Activated CD4-positive, alpha-beta memory T cell treated with anti-CD3 and anti-CD28 coated beads for 36 hours (primary cell): ENCODE measurements at regions of chr4 and their contacts with region 1.

Region 1: DNA sequence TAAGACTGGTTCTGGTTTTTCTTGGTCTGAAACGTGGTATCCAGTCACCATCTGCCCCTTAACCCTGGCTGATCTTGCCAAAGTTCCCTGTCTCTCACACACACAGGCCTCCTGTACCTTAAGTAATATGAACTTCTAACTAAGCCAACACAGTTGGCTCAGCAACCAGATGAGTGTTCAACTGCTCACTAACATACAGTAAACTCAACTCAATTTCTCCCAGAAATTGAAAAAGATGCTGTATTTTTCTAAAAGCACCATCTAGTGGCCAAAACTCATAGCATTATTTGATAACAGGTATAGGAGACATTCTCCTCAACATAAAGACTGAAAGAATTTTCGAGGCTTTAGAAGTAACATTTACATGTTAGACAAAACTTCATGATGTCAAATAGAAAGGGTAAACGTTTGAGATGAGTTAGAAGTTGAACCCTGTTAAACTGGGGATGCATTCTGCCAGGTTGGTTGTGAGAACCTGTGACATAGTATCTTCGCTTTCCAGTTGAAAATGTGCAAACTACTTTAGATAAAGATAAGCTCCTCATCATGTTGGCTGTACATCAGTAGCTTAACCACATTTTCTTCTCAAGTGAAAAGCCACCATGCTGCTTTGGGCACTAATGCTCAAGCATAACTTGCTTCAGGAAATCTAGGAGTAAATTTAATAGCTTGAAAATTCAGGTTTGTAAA is 31.2 kb downstream of the CCNI start:
- DNase-seq: no peak
- H3K4me3 Mint-ChIP-seq: no peak overlapping the region
- H3K27ac Mint-ChIP-seq: no peak overlapping the region
- H3K4me1 Mint-ChIP-seq: peaks cover 8% of the 10 kb centered on the region
- H3K27me3 Mint-ChIP-seq: no peaks in the 10 kb centered on the region

Region 2: GRCh38 chr4:76511947-76512346 is 532.7 kb before region 1 on chr4:
- CTCF ChIA-PET with region 1: interaction called, 9 read pairs
- POLR2A ChIA-PET with region 1: no interaction called
- intact Hi-C with region 1: loop called (anchors 1 kb)
- DNase-seq: no peak
- H3K4me3 Mint-ChIP-seq: no peak overlapping the region
- H3K27ac Mint-ChIP-seq: no peak overlapping the region
- H3K4me1 Mint-ChIP-seq: no peaks in the 10 kb centered on the region
- H3K27me3 Mint-ChIP-seq: no peaks in the 10 kb centered on the region

Region 3: DNA sequence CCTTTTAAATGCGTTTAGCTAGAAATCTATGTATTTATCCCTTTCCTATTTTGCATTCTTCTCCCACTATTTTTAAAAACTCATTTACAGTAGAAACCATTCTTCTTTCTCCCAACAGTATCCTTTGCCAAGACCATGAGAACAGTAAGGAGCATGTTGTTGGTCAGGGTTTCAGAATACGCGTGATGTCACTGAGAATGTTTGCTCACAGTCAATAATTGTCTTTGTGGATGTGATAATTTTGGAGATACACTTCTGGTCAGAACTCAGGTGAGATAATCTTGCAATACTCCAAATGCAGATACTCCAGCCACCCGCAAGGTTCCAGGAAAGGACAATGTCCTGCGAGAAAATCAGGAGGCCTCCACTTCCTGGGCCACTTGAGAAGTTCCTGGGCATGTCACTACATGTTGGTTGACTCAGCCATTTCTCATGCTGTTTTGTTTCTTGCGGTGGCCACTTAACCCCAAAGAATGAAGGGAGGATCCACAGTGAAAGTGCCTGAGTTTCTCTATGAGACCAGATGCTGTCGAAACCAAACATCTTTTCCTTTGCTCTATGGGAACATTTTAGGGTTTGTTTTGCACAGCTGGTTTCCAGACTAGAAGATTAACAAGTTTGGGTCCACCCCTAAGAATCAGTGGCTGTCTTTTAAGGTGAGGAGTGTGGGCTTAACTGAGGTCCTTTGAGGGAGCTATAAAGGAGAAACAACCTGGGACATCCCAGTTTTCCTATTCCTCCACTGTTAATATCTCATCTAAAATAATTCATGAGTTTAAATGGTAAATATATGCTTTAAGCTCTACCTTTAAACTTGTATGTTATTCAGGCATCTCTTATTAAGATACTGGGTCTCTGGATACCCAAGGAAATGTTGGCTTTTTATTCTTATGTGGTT is 262.7 kb before region 1 on chr4:
- CTCF ChIA-PET with region 1: no interaction called
- POLR2A ChIA-PET with region 1: no interaction called
- intact Hi-C with region 1: loop called (anchors 10 kb)
- DNase-seq: no peak
- H3K4me3 Mint-ChIP-seq: no peak overlapping the region
- H3K27ac Mint-ChIP-seq: no peak overlapping the region
- H3K4me1 Mint-ChIP-seq: no peaks in the 10 kb centered on the region
- H3K27me3 Mint-ChIP-seq: peaks cover 10% of the 10 kb centered on the region

Region 4: DNA sequence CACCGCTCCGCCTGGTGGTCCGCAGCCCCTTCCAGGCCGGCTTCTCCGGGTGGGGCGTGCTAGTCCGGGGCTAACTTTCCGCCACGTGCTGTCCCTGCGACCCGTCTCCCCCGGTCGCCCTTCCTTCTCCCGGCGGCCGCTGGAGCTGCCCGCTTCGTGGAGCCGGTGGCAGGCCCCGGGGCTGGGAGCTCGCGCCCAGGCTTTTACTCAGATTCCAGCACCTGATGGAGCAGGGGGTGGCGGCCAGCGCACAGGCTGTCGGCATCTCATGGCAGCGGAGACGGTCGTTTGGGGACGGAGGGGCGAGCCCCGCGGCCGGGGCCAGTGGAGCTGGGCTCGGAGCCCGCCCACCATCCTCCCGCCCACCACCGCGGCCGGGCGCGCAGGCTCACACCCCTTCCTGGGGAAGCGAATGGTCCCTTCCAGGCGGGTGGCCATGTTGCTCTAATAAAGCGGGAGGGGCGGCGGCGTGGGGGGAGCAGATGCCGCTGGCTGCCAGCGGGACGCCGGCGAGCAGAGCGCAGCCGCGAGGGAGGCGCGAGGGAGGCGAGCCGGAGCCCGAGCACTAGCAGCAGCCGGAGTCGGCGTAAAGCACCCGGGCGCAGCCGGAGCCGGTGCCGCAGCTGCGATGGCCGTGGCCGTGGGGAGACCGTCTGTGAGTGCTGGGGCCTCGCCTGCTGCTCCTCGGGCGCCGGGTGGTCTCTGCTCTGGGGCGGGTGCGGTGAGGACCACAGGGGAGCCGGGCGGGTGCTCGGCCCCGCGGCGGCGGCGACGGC is 95.1 kb before region 1 on chr4 and contains the start of gene SEPTIN11:
- CTCF ChIA-PET with region 1: interaction called, 8 read pairs
- POLR2A ChIA-PET with region 1: no interaction called
- intact Hi-C with region 1: loop called (anchors 5 kb)
- DNase-seq: peak; percentile 84
- H3K4me3 Mint-ChIP-seq: peak within 1 kb of the TSS; percentile 81
- H3K27ac Mint-ChIP-seq: peak within 1 kb of the TSS; percentile 51
- H3K4me1 Mint-ChIP-seq: peaks cover 12% of the 10 kb centered on the region
- H3K27me3 Mint-ChIP-seq: peaks cover 18% of the 10 kb centered on the region
- total RNA-seq, gene SEPTIN11: 28.3 to 33.6 TPM

Region 5: GRCh38 chr4:77020017-77020416 is 24.6 kb before region 1 on chr4:
- CTCF ChIA-PET with region 1: no interaction called
- POLR2A ChIA-PET with region 1: no interaction called
- intact Hi-C with region 1: no loop called
- DNase-seq: no peak
- H3K4me3 Mint-ChIP-seq: no peak overlapping the region
- H3K27ac Mint-ChIP-seq: no peak overlapping the region
- H3K4me1 Mint-ChIP-seq: peaks cover 6% of the 10 kb centered on the region
- H3K27me3 Mint-ChIP-seq: no peaks in the 10 kb centered on the region

Region 6: DNA sequence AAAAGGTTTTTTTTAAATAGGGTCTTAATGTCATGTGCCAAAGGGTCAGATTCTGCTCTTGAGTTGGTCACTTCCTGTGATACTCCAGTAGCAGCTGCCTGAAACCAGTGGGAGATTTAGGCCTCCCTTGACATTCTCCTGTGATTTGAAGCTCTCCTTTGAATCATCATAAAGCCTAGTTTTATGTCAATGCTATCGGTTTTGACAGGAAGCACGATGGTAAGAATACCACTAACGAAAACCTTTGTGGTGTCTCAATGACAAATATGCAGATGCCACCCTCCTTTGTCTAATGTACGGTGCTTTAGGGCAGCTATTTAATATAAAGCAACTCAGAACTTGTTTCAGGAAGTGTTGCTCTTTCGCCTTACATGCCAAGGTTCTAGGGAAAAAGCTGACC is 13.1 kb before region 1 on chr4:
- CTCF ChIA-PET with region 1: interaction called, 29 read pairs
- POLR2A ChIA-PET with region 1: interaction called, 4 read pairs
- intact Hi-C with region 1: no loop called
- DNase-seq: peak; percentile 35
- H3K4me3 Mint-ChIP-seq: no peak overlapping the region
- H3K27ac Mint-ChIP-seq: no peak overlapping the region
- H3K4me1 Mint-ChIP-seq: peaks cover 46% of the 10 kb centered on the region
- H3K27me3 Mint-ChIP-seq: peaks cover 9% of the 10 kb centered on the region